CD14-positive monocyte (primary cell): ENCODE measurements at regions of chr17 and their contacts with region 1.

Region 1: DNA sequence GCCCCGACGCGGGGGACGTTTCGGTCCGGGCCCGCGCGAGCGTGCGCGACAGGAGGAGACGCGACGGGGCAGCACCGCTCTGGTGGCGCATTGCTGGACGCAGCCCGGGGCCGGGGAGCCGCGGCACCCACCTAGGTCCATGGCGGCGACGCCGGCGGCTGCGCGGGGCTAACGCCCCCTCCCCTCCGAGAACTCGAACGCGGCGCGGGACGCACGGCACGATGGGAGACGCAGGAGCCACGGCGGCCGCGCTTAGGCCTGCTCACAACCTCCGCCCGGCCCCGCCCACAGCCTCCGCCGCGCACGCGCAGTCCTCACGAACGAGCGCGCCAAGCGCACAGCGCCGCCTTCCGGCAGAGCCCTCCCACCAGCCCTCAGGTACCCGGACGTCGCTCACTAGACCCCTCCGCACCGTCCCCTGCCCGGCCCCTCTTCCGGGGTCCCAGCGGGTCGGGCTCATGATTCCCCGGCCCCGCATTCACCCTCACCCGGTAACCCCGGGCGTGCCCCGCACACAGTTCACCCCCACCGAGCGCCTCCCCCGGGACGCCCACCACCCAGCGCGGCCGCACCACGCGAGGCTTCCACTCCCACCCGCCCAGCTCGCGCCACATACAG is at the start of gene GEMIN4:
- DNase-seq: peak; percentile 86 to 89 (median 87)
- H3K4me3 ChIP-seq: peak within 1 kb of the TSS; percentile 36 to 87 (median 62)
- H3K4me3 Mint-ChIP-seq: peak within 1 kb of the TSS; percentile 94 to 98
- H3K27ac ChIP-seq: peak within 1 kb of the TSS; percentile 50 to 84
- H3K27ac Mint-ChIP-seq: peak within 1 kb of the TSS; percentile 89 to 97 (median 94)
- H3K4me1 ChIP-seq: peaks cover 19 to 26% of the 10 kb centered on the region in 2 donors
- H3K4me1 Mint-ChIP-seq: peaks cover 29% of the 10 kb centered on the region
- H3K27me3 ChIP-seq: no peaks in the 10 kb centered on the region
- H3K27me3 Mint-ChIP-seq: peaks cover 0 to 7% (median 2%) of the 10 kb centered on the region in 3 donors
- CTCF ChIP-seq: peak; percentile 98
- polyA plus RNA-seq, gene GEMIN4: 8.8 to 10.6 (median 10.1) TPM

Region 2: DNA sequence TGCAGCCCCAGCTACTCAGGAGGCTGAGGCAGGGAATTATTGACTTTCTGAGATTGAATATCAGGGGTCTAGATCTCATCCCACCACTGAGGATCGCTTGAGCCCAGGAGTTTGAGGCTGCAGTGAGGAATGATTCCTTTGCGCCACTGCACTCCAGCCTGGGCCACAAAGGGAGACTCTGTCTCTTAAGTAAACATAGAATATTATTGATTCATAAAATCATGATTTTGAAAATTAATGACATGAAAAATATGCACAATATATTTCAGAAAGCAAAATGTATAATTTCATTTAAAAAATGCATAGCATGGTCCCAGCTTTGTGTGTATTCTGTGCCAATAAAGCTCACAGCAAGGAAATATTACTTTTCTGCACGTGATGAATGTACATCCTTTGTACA is 35.9 kb before region 1 on chr17:
- intact Hi-C with region 1: loop called (anchors 5 kb)
- DNase-seq: no peak
- H3K4me3 ChIP-seq: no peak overlapping the region
- H3K4me3 Mint-ChIP-seq: no peak overlapping the region
- H3K27ac ChIP-seq: no peak overlapping the region
- H3K27ac Mint-ChIP-seq: no peak overlapping the region
- H3K4me1 ChIP-seq: peaks cover 16 to 26% of the 10 kb centered on the region in 2 donors
- H3K4me1 Mint-ChIP-seq: peaks cover 16% of the 10 kb centered on the region
- H3K27me3 ChIP-seq: no peaks in the 10 kb centered on the region
- H3K27me3 Mint-ChIP-seq: peaks cover 3 to 10% (median 7%) of the 10 kb centered on the region in 3 donors
- CTCF ChIP-seq: no peak